Activated CD4-positive, alpha-beta T cell treated with anti-CD3 and anti-CD28 coated beads for 36 hours (primary cell): ENCODE measurements at regions of chr2 and their contacts with region 1.

Region 1: DNA sequence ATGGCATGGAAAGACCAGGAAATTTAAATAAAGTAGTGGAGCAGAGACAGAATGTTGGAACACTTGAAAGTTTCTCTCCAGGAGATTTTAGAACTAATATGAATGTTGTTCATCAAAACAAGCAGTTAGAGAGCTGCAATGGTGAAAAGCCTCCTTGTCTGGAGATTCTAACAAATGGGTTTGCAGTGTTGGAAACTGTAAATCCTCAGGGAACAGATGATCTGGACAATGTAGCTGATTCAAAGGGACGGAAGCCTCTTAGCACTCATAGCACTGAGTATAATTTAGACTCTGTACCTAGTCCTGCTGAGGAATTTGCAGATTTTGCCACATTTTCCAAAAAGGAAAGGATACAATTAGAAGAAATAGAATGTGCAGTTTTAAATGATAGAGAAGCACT is 27.7 kb downstream of the AFTPH start:
- DNase-seq: no peak
- ATAC-seq: no peak
- H3K4me3 Mint-ChIP-seq: no peak overlapping the region
- H3K27ac Mint-ChIP-seq: no peak overlapping the region
- H3K4me1 Mint-ChIP-seq: peaks cover 26% of the 10 kb centered on the region
- H3K27me3 Mint-ChIP-seq: no peaks in the 10 kb centered on the region

Region 2: GRCh38 chr2:64538764-64539433 is 13.0 kb before region 1 on chr2:
- CTCF ChIA-PET with region 1: interaction called, 11 read pairs
- POLR2A ChIA-PET with region 1: no interaction called
- intact Hi-C with region 1: loop called in 1 of 2 experiments (anchors 2 kb)
- DNase-seq: peak; percentile 34
- ATAC-seq: peak; percentile 76
- H3K4me3 Mint-ChIP-seq: no peak overlapping the region
- H3K27ac Mint-ChIP-seq: peak overlapping the region; percentile 66
- H3K4me1 Mint-ChIP-seq: peaks cover 76% of the 10 kb centered on the region
- H3K27me3 Mint-ChIP-seq: no peaks in the 10 kb centered on the region